Transverse colon (tissue), 4 donors: ENCODE measurements at regions of chr9 and their contacts with region 1.

Region 1: DNA sequence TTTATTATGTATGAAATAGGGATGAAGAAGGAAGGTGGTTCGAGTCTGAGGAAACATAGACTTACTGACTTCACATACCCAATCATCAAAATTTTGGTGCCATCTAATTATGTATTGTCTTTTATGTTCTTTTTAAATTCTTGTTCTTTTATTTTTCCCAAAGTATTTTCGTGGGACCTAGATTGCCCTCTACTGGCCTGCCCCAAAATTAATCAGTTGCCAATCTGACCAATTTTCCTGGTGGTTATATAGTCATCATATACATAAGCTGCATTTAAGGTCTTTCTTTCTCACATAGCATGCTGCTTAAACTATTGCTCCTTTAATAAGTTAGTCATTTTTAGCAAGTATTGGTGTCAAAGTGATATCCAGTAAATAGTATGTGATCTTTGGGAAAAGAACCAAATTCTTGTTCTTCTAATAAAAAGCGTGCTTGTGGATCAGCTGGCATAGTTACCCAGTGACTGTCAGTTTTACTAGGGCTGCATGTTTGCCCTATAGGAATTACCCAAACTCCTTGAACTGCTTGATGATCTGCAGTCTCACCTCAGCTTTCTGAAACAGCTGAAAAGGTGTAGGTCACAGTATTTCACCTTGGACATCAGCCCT is 223.5 kb downstream of the SH3GL2 start:
- DNase-seq: no peak
- H3K4me3 ChIP-seq: no peak overlapping the region
- H3K27ac ChIP-seq: no peak overlapping the region
- H3K4me1 ChIP-seq: no peaks in the 10 kb centered on the region
- H3K27me3 ChIP-seq: no peaks in the 10 kb centered on the region
- CTCF ChIP-seq: peak; percentile 20 to 51 (median 45)
- EP300 ChIP-seq: no peak
- POLR2A ChIP-seq: no peak

Region 2: DNA sequence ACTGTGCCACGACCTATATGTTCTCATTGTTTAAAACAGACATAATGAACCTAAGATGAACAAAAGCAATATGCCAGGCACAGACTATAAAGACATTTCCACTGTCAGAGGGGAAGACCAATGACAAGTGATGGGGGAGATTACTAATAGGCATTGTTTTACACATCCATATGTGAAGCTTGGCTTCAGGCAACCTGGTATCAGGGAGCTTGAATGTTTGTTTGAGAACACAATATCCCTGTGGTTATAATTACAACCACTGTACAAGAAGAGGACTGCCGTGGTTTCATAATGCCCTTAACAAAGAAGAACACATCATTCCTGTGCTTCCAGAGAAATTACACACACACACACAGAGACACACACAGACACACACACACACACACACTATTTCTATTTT is 1317.6 kb before region 1 on chr9:
- in situ Hi-C with region 1: no loop called
- intact Hi-C with region 1: no loop called
- DNase-seq: no peak
- H3K4me3 ChIP-seq: no peak overlapping the region
- H3K27ac ChIP-seq: peak overlapping the region in 2 of 4 donors; percentile 51 to 57
- H3K4me1 ChIP-seq: no peaks in the 10 kb centered on the region
- H3K27me3 ChIP-seq: no peaks in the 10 kb centered on the region
- CTCF ChIP-seq: no peak
- EP300 ChIP-seq: no peak
- POLR2A ChIP-seq: no peak

Region 3: GRCh38 chr9:17422994-17423680 is 379.2 kb before region 1 on chr9:
- in situ Hi-C with region 1: no loop called
- intact Hi-C with region 1: no loop called
- DNase-seq: peak; percentile 37
- H3K4me3 ChIP-seq: no peak overlapping the region
- H3K27ac ChIP-seq: peak overlapping the region in 1 of 4 donors; percentile 5
- H3K4me1 ChIP-seq: peaks cover 0 to 9% (median 0%) of the 10 kb centered on the region in 4 donors
- H3K27me3 ChIP-seq: no peaks in the 10 kb centered on the region
- CTCF ChIP-seq: no peak
- EP300 ChIP-seq: no peak
- POLR2A ChIP-seq: no peak

Region 4: DNA sequence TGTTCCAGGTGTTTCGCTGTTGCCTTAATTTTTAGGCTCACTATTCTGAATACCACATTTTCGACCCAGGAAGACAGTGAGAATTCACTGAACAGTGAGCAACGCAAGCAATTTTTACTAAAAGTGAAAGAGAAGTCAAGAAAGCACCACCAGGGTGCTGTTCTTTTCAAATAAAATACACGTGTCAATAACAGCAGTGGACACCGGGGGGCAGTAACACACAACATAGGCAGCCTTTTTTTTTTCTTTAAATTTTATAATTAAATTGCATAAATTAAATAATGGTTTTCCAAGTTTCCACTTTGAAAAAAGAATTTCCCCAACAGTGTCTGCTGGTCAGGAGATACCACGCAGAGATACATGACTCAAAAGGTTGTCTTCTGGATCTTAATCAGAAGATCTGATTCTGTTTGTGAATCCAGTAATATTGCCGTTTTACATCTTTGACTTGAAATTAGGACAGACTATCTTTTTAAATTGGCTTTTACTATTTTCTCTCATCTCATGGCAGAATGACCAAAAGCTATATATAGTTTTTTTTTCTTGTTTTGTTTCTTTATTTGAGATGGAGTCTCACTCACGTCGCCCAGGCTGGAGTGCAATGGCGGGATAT is 270.6 kb before region 1 on chr9:
- in situ Hi-C with region 1: loop called in 3 of 4 experiments (anchors 10 kb)
- intact Hi-C with region 1: no loop called
- DNase-seq: peak; percentile 25
- H3K4me3 ChIP-seq: no peak overlapping the region
- H3K27ac ChIP-seq: no peak overlapping the region
- H3K4me1 ChIP-seq: no peaks in the 10 kb centered on the region
- H3K27me3 ChIP-seq: no peaks in the 10 kb centered on the region
- CTCF ChIP-seq: peak; percentile 62 to 79 (median 70)
- EP300 ChIP-seq: no peak
- POLR2A ChIP-seq: no peak

Region 5: DNA sequence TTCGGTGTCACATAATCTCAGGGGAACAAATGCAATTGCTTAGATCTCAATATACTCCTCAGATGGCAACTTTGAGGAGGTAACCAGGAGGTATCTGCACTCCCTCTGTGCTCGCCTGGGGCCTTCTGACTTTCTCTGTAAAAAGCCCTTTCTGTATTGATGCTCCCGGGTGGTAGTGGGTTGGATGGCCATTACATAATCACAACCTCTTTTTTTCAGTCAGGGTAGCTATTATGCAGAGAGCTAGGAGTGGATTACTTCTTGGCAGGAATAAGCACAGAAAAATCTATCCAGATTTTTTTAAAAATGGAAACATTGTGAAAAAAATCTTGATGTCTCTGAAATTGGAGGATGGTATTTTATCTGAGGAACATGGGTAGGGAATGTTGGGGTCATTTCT is 106.9 kb before region 1 on chr9:
- in situ Hi-C with region 1: no loop called
- intact Hi-C with region 1: no loop called
- DNase-seq: no peak
- H3K4me3 ChIP-seq: no peak overlapping the region
- H3K27ac ChIP-seq: no peak overlapping the region
- H3K4me1 ChIP-seq: no peaks in the 10 kb centered on the region
- H3K27me3 ChIP-seq: no peaks in the 10 kb centered on the region
- CTCF ChIP-seq: no peak
- EP300 ChIP-seq: no peak
- POLR2A ChIP-seq: no peak

Region 6: GRCh38 chr9:18208154-18209059 is 406.1 kb after region 1 on chr9:
- in situ Hi-C with region 1: loop called in 3 of 4 experiments (anchors 5 to 10 kb)
- intact Hi-C with region 1: no loop called
- DNase-seq: peak; percentile 81
- H3K4me3 ChIP-seq: no peak overlapping the region
- H3K27ac ChIP-seq: peak overlapping the region in 3 of 4 donors; percentile 36 to 70 (median 57)
- H3K4me1 ChIP-seq: peaks cover 0 to 28% (median 10%) of the 10 kb centered on the region in 4 donors
- H3K27me3 ChIP-seq: no peaks in the 10 kb centered on the region
- CTCF ChIP-seq: peak; percentile 48 to 80 (median 66)
- EP300 ChIP-seq: no peak
- POLR2A ChIP-seq: no peak

Region 7: GRCh38 chr9:18215626-18216025 is 413.3 kb after region 1 on chr9:
- in situ Hi-C with region 1: loop called in 2 of 4 experiments (anchors 5 to 10 kb)
- intact Hi-C with region 1: no loop called
- DNase-seq: no peak
- H3K4me3 ChIP-seq: no peak overlapping the region
- H3K27ac ChIP-seq: no peak overlapping the region
- H3K4me1 ChIP-seq: peaks cover 0 to 9% (median 1%) of the 10 kb centered on the region in 4 donors
- H3K27me3 ChIP-seq: no peaks in the 10 kb centered on the region
- CTCF ChIP-seq: no peak
- EP300 ChIP-seq: no peak
- POLR2A ChIP-seq: no peak

Region 8: DNA sequence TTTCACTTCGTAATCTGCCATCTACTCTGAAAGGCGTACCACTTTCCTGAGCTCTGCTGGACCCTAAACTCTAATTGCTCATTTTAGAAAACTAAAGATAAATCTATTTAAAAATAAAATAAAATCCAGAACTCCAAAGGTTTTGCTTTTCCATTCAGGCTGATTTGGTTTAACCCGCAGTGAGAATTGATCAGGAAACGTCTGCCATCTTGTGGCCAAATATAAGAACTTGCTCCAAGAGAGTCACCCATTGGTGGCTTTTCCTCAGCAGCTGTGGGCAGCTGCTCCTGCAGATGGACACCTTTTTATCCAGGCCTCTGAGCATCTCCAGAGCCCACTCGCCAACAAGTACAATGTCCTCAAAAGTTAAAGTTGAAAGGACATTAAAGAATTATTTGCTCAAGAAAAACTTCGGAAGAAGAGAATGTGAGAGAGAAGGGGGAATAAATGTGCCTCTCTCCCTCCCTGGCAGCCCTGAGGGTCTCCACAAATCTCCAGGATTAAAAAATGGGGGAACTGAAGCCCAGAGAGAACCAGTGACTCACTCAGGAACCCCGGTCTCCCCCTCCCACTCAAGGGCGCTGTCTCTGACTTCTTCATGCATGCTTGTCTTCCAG is 1226.6 kb after region 1 on chr9:
- in situ Hi-C with region 1: loop called in 2 of 4 experiments (anchors 25 kb)
- intact Hi-C with region 1: loop called (anchors 10 kb)
- DNase-seq: peak; percentile 29
- H3K4me3 ChIP-seq: no peak overlapping the region
- H3K27ac ChIP-seq: no peak overlapping the region
- H3K4me1 ChIP-seq: no peaks in the 10 kb centered on the region
- H3K27me3 ChIP-seq: peaks cover 7% of the 10 kb centered on the region
- CTCF ChIP-seq: peak; percentile 70 to 75 (median 72)
- EP300 ChIP-seq: no peak
- POLR2A ChIP-seq: no peak